ENCODE measurements at regions of chr14 and their contacts with region 1.

Region 1: GRCh38 chr14:55015006-55015405 is 11.9 kb downstream of the WDHD1 start:
- DNase-seq: no peak
- ATAC-seq: no peak
- H3K4me3 ChIP-seq: no peak overlapping the region
- H3K4me3 Mint-ChIP-seq: no peak overlapping the region
- H3K27ac ChIP-seq: no peak overlapping the region
- H3K27ac Mint-ChIP-seq: no peak overlapping the region
- H3K4me1 ChIP-seq: no peaks in the 10 kb centered on the region
- H3K4me1 Mint-ChIP-seq: peaks cover 0 to under 1% (median 0%) of the 10 kb centered on the region in 3 donors
- H3K27me3 ChIP-seq: no peaks in the 10 kb centered on the region
- H3K27me3 Mint-ChIP-seq: no peaks in the 10 kb centered on the region

Region 2: DNA sequence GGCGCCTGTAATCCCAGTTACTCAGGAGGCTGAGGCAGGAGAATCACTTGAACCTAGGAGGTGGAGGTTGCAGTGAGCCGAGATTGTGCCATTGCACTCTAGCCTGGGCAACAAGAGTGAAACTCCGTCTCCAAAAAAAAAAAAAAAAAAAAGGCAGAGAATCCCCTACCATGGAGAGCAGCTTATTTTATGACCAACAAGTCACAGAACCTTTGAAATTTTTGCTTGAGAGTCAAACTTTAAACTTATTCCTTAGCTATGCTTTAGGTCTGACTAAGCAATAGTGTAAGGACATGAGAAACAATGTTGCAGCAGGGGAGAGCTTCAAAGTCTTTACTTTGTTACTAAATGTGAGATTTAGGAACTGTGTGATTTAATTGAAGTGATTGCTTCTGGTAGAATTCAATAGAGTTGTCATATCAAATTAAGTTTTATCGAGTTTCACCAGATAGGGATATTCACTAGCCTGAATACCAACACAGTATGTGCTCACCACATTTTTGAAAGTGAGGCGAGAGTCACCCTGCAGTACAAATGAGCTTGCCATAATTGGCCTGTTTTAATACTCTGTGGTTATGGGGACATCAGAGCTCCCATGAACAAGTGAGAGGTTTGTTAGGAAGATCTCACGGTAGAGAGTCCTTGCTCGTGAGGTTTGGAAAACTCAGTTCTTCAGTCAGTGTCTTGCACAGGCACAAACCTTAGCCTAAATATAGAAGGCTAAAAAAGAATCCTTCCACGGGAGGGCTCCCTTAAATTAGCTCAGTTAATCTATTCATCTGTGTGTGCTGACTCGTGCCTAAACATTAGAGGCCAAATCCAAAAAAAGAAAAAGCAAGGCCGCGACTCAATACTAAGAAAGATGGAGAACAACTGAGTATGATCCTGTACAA is 339.5 kb before region 1 on chr14:
- CTCF ChIA-PET with region 1: no interaction called
- POLR2A ChIA-PET with region 1: interaction called in 1 of 2 experiments, 15 read pairs
- DNase-seq: no peak
- ATAC-seq: no peak
- H3K4me3 ChIP-seq: no peak overlapping the region
- H3K4me3 Mint-ChIP-seq: no peak overlapping the region
- H3K27ac ChIP-seq: no peak overlapping the region
- H3K27ac Mint-ChIP-seq: no peak overlapping the region
- H3K4me1 ChIP-seq: peaks cover 0 to 12% of the 10 kb centered on the region in 2 experiments
- H3K4me1 Mint-ChIP-seq: peaks cover 0 to 5% (median 4%) of the 10 kb centered on the region in 3 donors
- H3K27me3 ChIP-seq: peaks cover 0 to 16% of the 10 kb centered on the region in 2 experiments
- H3K27me3 Mint-ChIP-seq: peaks cover 3 to 10% of the 10 kb centered on the region in 2 donors

Region 3: GRCh38 chr14:55026793-55027561 is 12.0 kb after region 1 on chr14 and contains the starts of genes SOCS4 and WDHD1:
- CTCF ChIA-PET with region 1: no interaction called
- POLR2A ChIA-PET with region 1: interaction called in 1 of 2 experiments, 16 read pairs
- DNase-seq: peak; percentile 88 to 98 (median 93)
- ATAC-seq: peak; percentile 90 to 94 (median 94)
- H3K4me3 ChIP-seq: peak within 1 kb of the TSS; percentile 83 to 98
- H3K4me3 Mint-ChIP-seq: peak within 1 kb of the TSS; percentile 91 to 92 (median 91)
- H3K27ac ChIP-seq: peak within 1 kb of the TSS; percentile 86
- H3K27ac Mint-ChIP-seq: peak within 1 kb of the TSS; percentile 83 to 89
- H3K4me1 ChIP-seq: peaks cover 9 to 26% of the 10 kb centered on the region in 2 experiments
- H3K4me1 Mint-ChIP-seq: peaks cover 49 to 58% (median 53%) of the 10 kb centered on the region in 3 donors
- H3K27me3 ChIP-seq: no peaks in the 10 kb centered on the region
- H3K27me3 Mint-ChIP-seq: no peaks in the 10 kb centered on the region
- total RNA-seq, gene SOCS4: 16.7 to 26.4 (median 21.1) TPM
- total RNA-seq, gene WDHD1: 2.5 to 6.1 (median 4.9) TPM